ENCODE measurements at regions of chr10 and their contacts with region 1.

Region 1: DNA sequence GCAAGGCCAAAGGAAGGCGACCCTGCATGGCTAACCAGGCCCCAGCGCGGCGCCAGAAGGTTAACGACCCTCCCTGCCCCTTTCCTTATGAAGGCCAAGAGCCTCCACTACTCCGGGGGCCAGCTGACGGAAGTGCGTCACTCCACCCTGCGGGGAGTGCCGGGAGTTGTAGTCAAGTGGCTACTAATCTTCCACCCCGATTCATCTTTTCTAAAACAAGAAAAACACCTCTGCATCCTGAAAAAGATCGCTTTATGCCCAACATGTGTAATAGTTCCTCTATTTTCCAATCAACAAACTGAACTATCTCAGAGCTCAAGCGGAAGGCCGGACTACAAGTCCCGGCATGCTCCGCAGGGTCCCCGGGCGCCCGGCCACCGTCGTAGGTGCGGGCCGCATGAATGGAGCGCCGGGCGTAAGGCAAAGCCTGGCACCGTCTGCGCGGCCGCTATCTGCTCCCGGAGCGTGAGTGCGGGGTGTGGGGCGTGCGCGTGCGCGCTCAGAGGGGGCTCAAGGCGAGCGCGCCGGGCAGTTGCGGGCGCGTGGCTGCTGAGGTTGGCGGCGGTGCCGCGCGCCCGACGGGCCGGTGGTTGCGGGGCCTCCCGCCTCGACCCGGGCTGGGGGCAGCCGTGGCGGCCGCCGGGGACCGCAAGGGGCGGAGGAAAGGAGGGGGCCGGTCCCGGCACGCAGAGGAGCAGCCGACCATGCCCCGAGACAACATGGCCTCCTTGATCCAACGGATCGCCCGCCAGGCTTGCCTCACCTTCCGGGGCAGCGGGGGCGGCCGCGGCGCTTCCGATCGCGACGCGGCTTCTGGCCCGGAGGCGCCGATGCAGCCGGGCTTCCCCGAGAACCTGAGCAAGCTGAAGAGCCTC is at the start of gene ADO:
- DNase-seq: peak; percentile 63 to 90 (median 72)
- ATAC-seq: peak; percentile 89
- H3K4me3 ChIP-seq: peak within 1 kb of the TSS; percentile 64
- H3K4me3 Mint-ChIP-seq: peak within 1 kb of the TSS; percentile 93
- H3K27ac ChIP-seq: peak within 1 kb of the TSS; percentile 76 to 94
- H3K27ac Mint-ChIP-seq: peak within 1 kb of the TSS; percentile 94
- H3K4me1 ChIP-seq: peaks cover 19% of the 10 kb centered on the region
- H3K4me1 Mint-ChIP-seq: peaks cover 44% of the 10 kb centered on the region
- H3K27me3 ChIP-seq: no peaks in the 10 kb centered on the region
- H3K27me3 Mint-ChIP-seq: no peaks in the 10 kb centered on the region
- CTCF ChIP-seq: no peak
- total RNA-seq, gene ADO: 14.3 to 15.9 TPM

Region 2: GRCh38 chr10:62726142-62726541 is 78.5 kb before region 1 on chr10:
- CTCF ChIA-PET with region 1: no interaction called
- POLR2A ChIA-PET with region 1: no interaction called
- intact Hi-C with region 1: loop called in 1 of 2 experiments (anchors 5 kb)
- DNase-seq: peak in 1 of 14 experiments; percentile 16
- ATAC-seq: no peak
- H3K4me3 ChIP-seq: no peak overlapping the region
- H3K4me3 Mint-ChIP-seq: no peak overlapping the region
- H3K27ac ChIP-seq: no peak overlapping the region
- H3K27ac Mint-ChIP-seq: no peak overlapping the region
- H3K4me1 ChIP-seq: peaks cover 6% of the 10 kb centered on the region
- H3K4me1 Mint-ChIP-seq: peaks cover 10% of the 10 kb centered on the region
- H3K27me3 ChIP-seq: no peaks in the 10 kb centered on the region
- H3K27me3 Mint-ChIP-seq: no peaks in the 10 kb centered on the region
- CTCF ChIP-seq: no peak

Region 3: GRCh38 chr10:62779487-62780248 is 24.9 kb before region 1 on chr10:
- CTCF ChIA-PET with region 1: interaction called, 3 read pairs
- POLR2A ChIA-PET with region 1: interaction called, 17 read pairs
- intact Hi-C with region 1: no loop called
- DNase-seq: peak; percentile 59 to 95 (median 71)
- ATAC-seq: peak; percentile 99
- H3K4me3 ChIP-seq: no peak overlapping the region
- H3K4me3 Mint-ChIP-seq: no peak overlapping the region
- H3K27ac ChIP-seq: no peak overlapping the region
- H3K27ac Mint-ChIP-seq: peak overlapping the region; percentile 34
- H3K4me1 ChIP-seq: peaks cover 16% of the 10 kb centered on the region
- H3K4me1 Mint-ChIP-seq: peaks cover 15% of the 10 kb centered on the region
- H3K27me3 ChIP-seq: no peaks in the 10 kb centered on the region
- H3K27me3 Mint-ChIP-seq: no peaks in the 10 kb centered on the region
- CTCF ChIP-seq: no peak

Region 4: DNA sequence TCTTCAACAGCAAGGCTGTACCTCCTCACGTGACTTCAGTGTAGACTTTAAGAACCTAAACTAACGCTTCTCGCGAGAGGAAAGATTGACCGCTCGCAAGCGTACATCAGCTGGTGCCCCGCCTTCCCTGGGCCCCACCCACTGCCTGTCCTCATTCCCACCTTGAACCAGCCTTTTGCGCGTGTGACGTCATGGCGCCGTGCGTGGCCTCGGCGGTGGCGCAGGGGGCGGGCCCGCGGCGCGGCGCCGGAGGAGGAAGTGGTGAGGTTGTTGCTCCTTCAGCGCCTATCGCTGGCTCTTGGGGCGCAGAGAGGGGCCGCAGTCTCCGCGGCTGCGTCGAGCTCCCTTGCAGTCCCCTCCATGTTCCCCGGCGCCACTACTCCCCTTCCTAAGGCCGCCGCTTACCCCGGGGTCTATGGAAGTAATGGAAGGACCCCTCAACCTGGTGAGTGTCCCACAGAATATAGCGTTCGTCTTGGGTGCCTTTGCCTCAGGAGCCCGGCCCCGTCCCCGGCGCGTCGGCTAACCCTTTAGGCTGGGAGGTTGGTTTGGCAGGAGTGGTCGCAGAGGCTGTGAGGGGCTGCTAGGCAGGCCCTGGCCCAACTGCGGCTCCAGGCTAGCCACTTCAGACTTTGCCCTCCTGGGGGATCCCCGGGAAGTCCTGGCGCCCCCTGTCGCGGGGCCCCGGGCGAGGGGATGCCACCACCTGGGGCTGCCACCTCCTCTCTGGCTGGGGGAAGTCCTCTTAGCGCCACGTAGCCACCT is 328.6 kb after region 1 on chr10 and contains the start of gene NRBF2:
- CTCF ChIA-PET with region 1: no interaction called
- POLR2A ChIA-PET with region 1: interaction called, 14 read pairs
- intact Hi-C with region 1: loop called in 1 of 2 experiments (anchors 5 kb)
- DNase-seq: peak; percentile 91 to 99 (median 95)
- ATAC-seq: peak; percentile 90
- H3K4me3 ChIP-seq: peak within 1 kb of the TSS; percentile 89
- H3K4me3 Mint-ChIP-seq: peak within 1 kb of the TSS; percentile 94
- H3K27ac ChIP-seq: peak within 1 kb of the TSS; percentile 97 to 98
- H3K27ac Mint-ChIP-seq: peak within 1 kb of the TSS; percentile 88
- H3K4me1 ChIP-seq: peaks cover 44% of the 10 kb centered on the region
- H3K4me1 Mint-ChIP-seq: peaks cover 45% of the 10 kb centered on the region
- H3K27me3 ChIP-seq: no peaks in the 10 kb centered on the region
- H3K27me3 Mint-ChIP-seq: peaks cover 9% of the 10 kb centered on the region
- CTCF ChIP-seq: peak; percentile 22
- total RNA-seq, gene NRBF2: 25.3 to 25.6 TPM